Dorsolateral prefrontal cortex (tissue), 120 donors: ENCODE measurements at regions of chr5 and their contacts with region 1.

Region 1: DNA sequence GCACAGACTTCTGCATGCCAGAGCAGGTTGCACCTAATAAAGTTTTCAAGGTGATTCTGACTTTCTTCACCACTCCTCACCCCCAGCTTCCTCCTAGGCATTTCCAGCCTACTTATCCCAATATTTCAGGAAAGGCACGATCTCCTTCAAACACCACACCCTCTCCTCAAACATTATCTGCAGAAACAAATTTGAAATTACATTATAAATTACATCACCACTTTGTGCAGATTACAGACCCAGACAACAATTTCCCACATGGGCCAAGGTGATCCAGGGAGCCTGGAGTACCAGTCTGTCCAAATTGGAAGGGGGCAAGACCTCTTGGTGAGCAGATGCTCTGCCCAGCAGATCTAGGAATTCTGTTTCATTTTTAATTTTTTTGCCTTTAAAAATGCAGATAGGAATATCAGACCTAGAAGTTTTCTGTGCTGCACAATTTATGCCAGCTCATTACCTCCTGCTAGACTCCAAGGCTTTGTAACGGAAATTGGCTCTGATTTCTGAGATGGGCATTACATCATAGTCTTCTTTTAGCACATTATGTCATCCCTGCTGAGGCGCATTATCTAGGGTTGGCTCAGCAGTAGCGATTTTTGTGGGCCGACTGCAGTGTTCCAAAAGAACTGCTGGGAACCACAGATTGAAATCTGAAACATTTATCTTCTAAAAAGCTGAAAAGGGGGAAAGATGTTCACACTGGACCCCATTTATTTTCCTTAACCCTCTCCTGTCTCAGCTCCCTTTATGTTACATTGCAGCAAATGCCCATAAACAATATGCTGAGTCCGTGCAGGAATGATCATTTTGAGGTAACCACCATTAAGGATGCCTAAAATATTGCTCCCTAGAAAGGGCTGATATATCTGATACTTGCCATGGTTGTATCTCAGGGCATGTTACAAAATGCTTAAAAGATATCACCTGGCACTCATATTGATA is 363.2 kb upstream of the SLC30A5 start:
- DNase-seq: peak in 9 of 10 donors; percentile 48 to 85 (median 69)
- H3K4me3 ChIP-seq: peak overlapping the region in 31 of 59 donors; percentile 1 to 51 (median 18)
- H3K27ac ChIP-seq: peak overlapping the region; percentile 25 to 98 (median 89)
- H3K27me3 ChIP-seq: no peaks in the 10 kb centered on the region
- CTCF ChIP-seq: peak in 8 of 56 donors; percentile 6 to 24 (median 18)

Region 2: GRCh38 chr5:68460147-68460798 is 270.4 kb before region 1 on chr5:
- intact Hi-C with region 1: loop called in 1 of 2 experiments (anchors 10 kb)
- DNase-seq: no peak
- H3K4me3 ChIP-seq: no peak overlapping the region
- H3K27ac ChIP-seq: peak overlapping the region in 12 of 59 donors; percentile 1 to 38 (median 14)
- H3K27me3 ChIP-seq: no peaks in the 10 kb centered on the region
- CTCF ChIP-seq: peak; percentile 51 to 85 (median 74)

Region 3: GRCh38 chr5:68554571-68555279 is 175.9 kb before region 1 on chr5:
- intact Hi-C with region 1: loop called in 1 of 2 experiments (anchors 10 kb)
- DNase-seq: no peak
- H3K4me3 ChIP-seq: no peak overlapping the region
- H3K27ac ChIP-seq: no peak overlapping the region
- H3K27me3 ChIP-seq: no peaks in the 10 kb centered on the region
- CTCF ChIP-seq: no peak